Psoas muscle (tissue), 8 donors: ENCODE measurements at regions of chr9 and their contacts with region 1.

Region 1: DNA sequence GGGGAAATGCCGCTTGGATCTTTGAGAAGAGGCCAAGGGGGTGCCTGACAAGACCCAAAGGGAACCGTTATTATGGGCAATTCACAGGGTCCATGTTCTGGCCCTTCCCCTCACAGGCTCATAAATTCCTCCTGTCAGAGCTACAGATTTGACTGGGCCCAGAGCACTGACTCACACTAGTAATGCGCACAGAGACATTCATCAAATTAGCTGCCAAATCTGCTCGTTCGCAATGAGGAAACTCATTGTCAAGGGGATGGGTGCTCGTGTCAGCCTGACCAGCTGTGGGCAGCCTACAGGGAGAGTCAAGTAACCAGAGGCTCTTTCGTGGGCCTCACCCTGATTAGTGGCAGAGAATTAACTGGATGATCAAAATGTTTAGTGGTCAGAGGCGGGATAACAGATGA is 377.4 kb downstream of the ACTL7B start:
- DNase-seq: peak; percentile 28 to 72
- ATAC-seq: peak; percentile 82 to 91 (median 86)
- H3K4me3 ChIP-seq: peak overlapping the region; percentile 6
- H3K27ac ChIP-seq: peak overlapping the region; percentile 89
- H3K4me1 ChIP-seq: peaks cover 45% of the 10 kb centered on the region
- H3K27me3 ChIP-seq: no peaks in the 10 kb centered on the region
- CTCF ChIP-seq: peak; percentile 21

Region 2: DNA sequence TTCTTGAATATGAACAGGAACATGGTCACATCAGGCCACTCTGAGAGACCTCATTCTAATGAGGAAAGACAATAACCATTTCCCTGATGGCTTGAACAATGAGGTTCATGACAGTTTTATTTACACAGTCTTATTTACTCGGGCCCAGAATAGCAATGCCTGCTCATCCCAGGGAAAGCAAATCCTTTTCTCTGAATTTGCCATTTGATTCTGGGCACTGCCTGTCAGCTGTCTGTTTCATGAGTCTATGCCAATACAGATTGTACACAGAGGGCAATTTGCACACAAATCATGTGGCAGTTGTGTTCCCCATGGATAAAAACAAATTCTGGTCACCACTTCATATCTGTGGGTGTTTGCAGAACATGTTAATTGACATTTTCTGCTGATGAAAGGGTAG is 115.1 kb before region 1 on chr9:
- intact Hi-C with region 1: loop called in 1 of 2 experiments (anchors 10 kb)
- DNase-seq: no peak
- ATAC-seq: peak; percentile 90 to 98 (median 92)
- H3K4me3 ChIP-seq: no peak overlapping the region
- H3K27ac ChIP-seq: peak overlapping the region; percentile 71
- H3K4me1 ChIP-seq: peaks cover 33% of the 10 kb centered on the region
- H3K27me3 ChIP-seq: no peaks in the 10 kb centered on the region
- CTCF ChIP-seq: no peak

Region 3: GRCh38 chr9:108543251-108543768 is 64.9 kb after region 1 on chr9:
- intact Hi-C with region 1: loop called in 1 of 2 experiments (anchors 5 kb)
- DNase-seq: no peak
- ATAC-seq: no peak
- H3K4me3 ChIP-seq: no peak overlapping the region
- H3K27ac ChIP-seq: no peak overlapping the region
- H3K4me1 ChIP-seq: no peaks in the 10 kb centered on the region
- H3K27me3 ChIP-seq: no peaks in the 10 kb centered on the region
- CTCF ChIP-seq: no peak

Region 4: GRCh38 chr9:108551030-108551838 is 72.8 kb after region 1 on chr9:
- intact Hi-C with region 1: loop called (anchors 2 to 5 kb)
- DNase-seq: peak in 1 of 2 donors; percentile 65
- ATAC-seq: peak; percentile 90 to 95 (median 92)
- H3K4me3 ChIP-seq: peak overlapping the region; percentile 46
- H3K27ac ChIP-seq: peak overlapping the region; percentile 78
- H3K4me1 ChIP-seq: peaks cover 41% of the 10 kb centered on the region
- H3K27me3 ChIP-seq: no peaks in the 10 kb centered on the region
- CTCF ChIP-seq: no peak

Region 5: DNA sequence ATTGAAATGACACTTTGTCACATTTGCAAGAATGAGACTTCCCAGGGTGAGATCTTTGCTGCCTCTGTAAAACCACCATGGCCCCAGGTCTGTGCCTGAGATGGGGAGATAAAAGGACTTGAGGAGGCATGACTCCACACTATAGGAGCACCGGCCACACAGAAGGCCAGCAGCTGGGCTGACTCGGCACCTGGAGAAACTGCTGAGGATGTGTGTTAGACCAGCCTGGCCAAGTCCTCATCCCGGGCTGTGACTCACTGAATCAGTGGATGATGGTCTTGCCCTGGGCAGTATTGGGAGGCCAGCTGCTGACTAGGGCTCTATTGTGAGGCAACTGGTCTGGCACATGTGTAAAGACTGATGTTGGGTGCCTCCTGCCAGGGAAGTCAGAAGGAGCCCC is 91.2 kb after region 1 on chr9:
- intact Hi-C with region 1: no loop called
- DNase-seq: no peak
- ATAC-seq: peak in 3 of 4 donors; percentile 61 to 81 (median 62)
- H3K4me3 ChIP-seq: no peak overlapping the region
- H3K27ac ChIP-seq: no peak overlapping the region
- H3K4me1 ChIP-seq: no peaks in the 10 kb centered on the region
- H3K27me3 ChIP-seq: no peaks in the 10 kb centered on the region
- CTCF ChIP-seq: no peak